ENCODE measurements at regions of chr10 and their contacts with region 1.

Region 1: GRCh38 chr10:57351076-57351475 is 916.6 kb downstream of the IPMK start:
- DNase-seq: peak in 1 of 6 donors; percentile 30
- ATAC-seq: no peak
- H3K4me3 ChIP-seq: no peak overlapping the region
- H3K27ac ChIP-seq: no peak overlapping the region
- H3K4me1 ChIP-seq: no peaks in the 10 kb centered on the region
- H3K27me3 ChIP-seq: no peaks in the 10 kb centered on the region
- CTCF ChIP-seq: no peak

Region 2: GRCh38 chr10:57288754-57289153 is 62.3 kb before region 1 on chr10:
- intact Hi-C with region 1: no loop called
- DNase-seq: no peak
- ATAC-seq: no peak
- H3K4me3 ChIP-seq: no peak overlapping the region
- H3K27ac ChIP-seq: no peak overlapping the region
- H3K4me1 ChIP-seq: no peaks in the 10 kb centered on the region
- H3K27me3 ChIP-seq: no peaks in the 10 kb centered on the region
- CTCF ChIP-seq: no peak

Region 3: GRCh38 chr10:57303567-57303966 is 47.5 kb before region 1 on chr10:
- intact Hi-C with region 1: no loop called
- DNase-seq: no peak
- ATAC-seq: no peak
- H3K4me3 ChIP-seq: no peak overlapping the region
- H3K27ac ChIP-seq: no peak overlapping the region
- H3K4me1 ChIP-seq: no peaks in the 10 kb centered on the region
- H3K27me3 ChIP-seq: no peaks in the 10 kb centered on the region
- CTCF ChIP-seq: no peak

Region 4: GRCh38 chr10:58064714-58065528 is 713.8 kb after region 1 on chr10:
- intact Hi-C with region 1: loop called in 2 of 3 experiments (anchors 5 to 10 kb)
- DNase-seq: peak in 2 of 6 donors; percentile 3 to 47
- ATAC-seq: peak; percentile 46 to 80 (median 74)
- H3K4me3 ChIP-seq: no peak overlapping the region
- H3K27ac ChIP-seq: no peak overlapping the region
- H3K4me1 ChIP-seq: no peaks in the 10 kb centered on the region
- H3K27me3 ChIP-seq: no peaks in the 10 kb centered on the region
- CTCF ChIP-seq: peak; percentile 48 to 56 (median 49)

Measured in pancreas (tissue), 10 donors.